PC-3 (cell line): ENCODE measurements at regions of chr1 and their contacts with region 1.

Region 1: GRCh38 chr1:216447907-216448568 is 24.8 kb upstream of the USH2A start:
- DNase-seq: peak; percentile 93
- ATAC-seq: peak; percentile 97
- H3K4me3 ChIP-seq: no peak overlapping the region
- H3K27ac ChIP-seq: peak overlapping the region; percentile 7; the same call in 1 of the 2 replicates
- H3K4me1 ChIP-seq: peaks cover 17% of the 10 kb centered on the region
- H3K27me3 ChIP-seq: no peaks in the 10 kb centered on the region
- CTCF ChIP-seq: no peak

Region 2: GRCh38 chr1:216193839-216194439 is 254.1 kb before region 1 on chr1:
- CTCF ChIA-PET with region 1: no interaction called
- POLR2A ChIA-PET with region 1: no interaction called
- intact Hi-C with region 1: no loop called
- DNase-seq: peak; percentile 57
- ATAC-seq: peak; percentile 91
- H3K4me3 ChIP-seq: no peak overlapping the region
- H3K27ac ChIP-seq: no peak overlapping the region
- H3K4me1 ChIP-seq: no peaks in the 10 kb centered on the region
- H3K27me3 ChIP-seq: peaks cover 33% of the 10 kb centered on the region
- CTCF ChIP-seq: peak; percentile 61

Region 3: GRCh38 chr1:216281757-216282156 is 166.3 kb before region 1 on chr1:
- CTCF ChIA-PET with region 1: no interaction called
- POLR2A ChIA-PET with region 1: no interaction called
- intact Hi-C with region 1: loop called (anchors 2 kb)
- DNase-seq: peak; percentile 53
- ATAC-seq: peak; percentile 87
- H3K4me3 ChIP-seq: no peak overlapping the region
- H3K27ac ChIP-seq: no peak overlapping the region
- H3K4me1 ChIP-seq: peaks cover 7% of the 10 kb centered on the region
- H3K27me3 ChIP-seq: no peaks in the 10 kb centered on the region
- CTCF ChIP-seq: no peak

Region 4: DNA sequence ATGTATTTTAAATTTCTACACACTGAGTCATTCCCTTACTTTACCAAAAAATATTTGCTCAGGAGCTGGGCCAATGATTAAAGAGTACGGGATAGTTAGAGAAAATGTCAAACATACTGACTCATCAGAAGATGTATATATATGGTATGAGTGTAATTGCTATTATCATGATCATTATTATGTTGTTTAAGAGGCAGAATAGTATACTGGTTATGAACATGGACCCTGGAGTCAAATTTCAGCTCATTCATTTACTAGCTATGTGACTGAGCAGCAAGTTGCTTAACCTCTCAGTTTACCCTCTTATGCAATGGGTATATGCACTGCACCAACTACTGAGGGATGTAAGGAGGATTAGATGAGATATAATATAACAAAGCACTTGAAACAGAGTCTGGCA is 16.5 kb after region 1 on chr1:
- CTCF ChIA-PET with region 1: no interaction called
- POLR2A ChIA-PET with region 1: no interaction called
- intact Hi-C with region 1: loop called (anchors 1 kb)
- DNase-seq: peak; percentile 99
- ATAC-seq: peak; percentile 97
- H3K4me3 ChIP-seq: no peak overlapping the region
- H3K27ac ChIP-seq: no peak overlapping the region
- H3K4me1 ChIP-seq: peaks cover 43% of the 10 kb centered on the region
- H3K27me3 ChIP-seq: no peaks in the 10 kb centered on the region
- CTCF ChIP-seq: no peak